ENCODE measurements at regions of chr17 and their contacts with region 1.

Region 1: DNA sequence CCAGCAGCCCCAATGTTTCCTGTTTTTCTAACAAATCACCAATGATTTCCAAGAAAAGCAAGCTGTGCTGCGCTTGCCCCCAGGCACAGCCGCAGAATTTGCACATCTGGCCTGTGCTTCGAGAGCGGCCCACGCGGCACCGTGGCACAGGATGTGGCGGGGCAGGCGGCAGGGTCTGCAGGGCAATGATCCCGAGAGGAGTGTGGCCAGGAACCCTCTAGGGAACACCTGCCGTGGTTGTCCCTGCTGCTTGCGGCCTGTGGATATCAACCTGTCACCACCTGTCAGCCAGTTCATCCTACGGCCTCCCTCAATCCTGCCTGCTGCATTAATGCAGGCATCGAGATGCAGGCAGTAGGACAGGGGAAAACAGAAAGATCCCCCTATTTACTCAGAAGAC is 24.0 kb downstream of the PIK3R5 start:
- DNase-seq: peak; percentile 68 to 77 (median 74)
- H3K4me3 ChIP-seq: peak overlapping the region in 1 of 2 donors; percentile 31
- H3K4me3 Mint-ChIP-seq: peak overlapping the region; percentile 71 to 90 (median 84)
- H3K27ac ChIP-seq: peak overlapping the region; percentile 75
- H3K27ac Mint-ChIP-seq: peak overlapping the region; percentile 94 to 99 (median 98)
- H3K4me1 ChIP-seq: peaks cover 85% of the 10 kb centered on the region
- H3K4me1 Mint-ChIP-seq: peaks cover 66 to 94% (median 80%) of the 10 kb centered on the region in 4 donors
- H3K27me3 ChIP-seq: no peaks in the 10 kb centered on the region
- H3K27me3 Mint-ChIP-seq: no peaks in the 10 kb centered on the region

Region 2: GRCh38 chr17:8806926-8807550 is 134.5 kb before region 1 on chr17:
- CTCF ChIA-PET with region 1: no interaction called
- POLR2A ChIA-PET with region 1: no interaction called
- intact Hi-C with region 1: no loop called
- DNase-seq: no peak
- H3K4me3 ChIP-seq: no peak overlapping the region
- H3K4me3 Mint-ChIP-seq: peak overlapping the region in 1 of 8 donors; percentile 3
- H3K27ac ChIP-seq: no peak overlapping the region
- H3K27ac Mint-ChIP-seq: peak overlapping the region in 4 of 7 donors; percentile 6 to 93 (median 16)
- H3K4me1 ChIP-seq: peaks cover 6% of the 10 kb centered on the region
- H3K4me1 Mint-ChIP-seq: peaks cover 1 to 11% (median 6%) of the 10 kb centered on the region in 4 donors
- H3K27me3 ChIP-seq: no peaks in the 10 kb centered on the region
- H3K27me3 Mint-ChIP-seq: peaks cover under 1 to 5% of the 10 kb centered on the region in 2 donors

Region 3: DNA sequence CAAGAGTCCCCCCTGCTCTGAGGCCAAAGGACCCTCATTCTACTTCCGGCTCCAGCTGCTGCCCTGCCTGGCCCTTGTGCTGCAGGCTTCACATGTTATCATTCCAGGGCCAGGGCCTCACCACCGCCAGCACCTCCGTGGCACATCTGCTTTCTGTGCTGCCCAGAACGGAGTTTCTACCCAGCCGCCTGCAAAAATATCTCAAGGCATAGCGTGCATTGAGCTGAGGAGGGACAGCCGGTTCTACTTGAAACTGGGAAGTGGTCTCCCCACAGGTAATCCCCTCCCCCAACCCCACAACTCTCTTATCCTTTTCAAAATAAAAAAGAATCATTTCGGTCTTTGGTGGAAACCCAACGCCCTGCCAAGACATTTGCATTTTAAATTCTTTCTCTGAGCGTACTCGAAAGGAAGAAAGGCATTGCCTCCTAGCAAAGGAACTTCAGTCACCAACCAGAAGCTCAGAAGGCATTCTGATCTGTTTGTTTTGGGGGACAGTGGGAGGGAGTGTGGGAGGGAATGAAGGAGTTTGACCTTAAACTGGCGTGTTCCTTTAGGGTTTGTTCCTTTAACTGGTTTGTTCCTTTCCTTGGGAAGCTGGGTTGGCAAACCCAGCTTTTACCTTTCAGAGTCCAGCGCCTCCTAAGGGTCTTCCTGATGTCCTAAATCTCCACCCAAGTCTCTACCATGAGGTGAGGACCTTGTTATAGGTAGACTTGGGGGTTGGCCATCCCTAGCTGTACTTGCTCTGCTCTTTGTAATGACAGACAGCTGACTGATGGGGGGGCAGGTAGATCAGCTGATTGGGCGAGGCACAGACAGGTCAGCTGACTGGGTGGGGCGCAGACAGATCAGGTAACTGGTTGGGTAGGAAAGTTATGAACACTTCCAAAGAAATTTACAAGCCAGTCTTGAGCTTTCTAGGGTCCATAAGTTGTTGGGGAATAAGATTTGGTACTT is 40.6 kb before region 1 on chr17:
- CTCF ChIA-PET with region 1: interaction called, 11 read pairs
- POLR2A ChIA-PET with region 1: interaction called, 19 read pairs
- intact Hi-C with region 1: no loop called
- DNase-seq: no peak
- H3K4me3 ChIP-seq: no peak overlapping the region
- H3K4me3 Mint-ChIP-seq: peak overlapping the region in 6 of 8 donors; percentile 18 to 86 (median 52)
- H3K27ac ChIP-seq: peak overlapping the region; percentile 82
- H3K27ac Mint-ChIP-seq: peak overlapping the region; percentile 96 to 100 (median 98)
- H3K4me1 ChIP-seq: peaks cover 59% of the 10 kb centered on the region
- H3K4me1 Mint-ChIP-seq: peaks cover 52 to 75% (median 65%) of the 10 kb centered on the region in 4 donors
- H3K27me3 ChIP-seq: no peaks in the 10 kb centered on the region
- H3K27me3 Mint-ChIP-seq: no peaks in the 10 kb centered on the region

Region 4: GRCh38 chr17:8954339-8954738 is 12.8 kb after region 1 on chr17:
- CTCF ChIA-PET with region 1: interaction called, 17 read pairs
- POLR2A ChIA-PET with region 1: interaction called, 509 read pairs
- intact Hi-C with region 1: loop called (anchors 1 kb)
- DNase-seq: peak; percentile 80 to 96 (median 81)
- H3K4me3 ChIP-seq: peak overlapping the region in 1 of 2 donors; percentile 27
- H3K4me3 Mint-ChIP-seq: peak overlapping the region; percentile 76 to 91 (median 88)
- H3K27ac ChIP-seq: peak overlapping the region; percentile 65
- H3K27ac Mint-ChIP-seq: peak overlapping the region; percentile 92 to 100 (median 98)
- H3K4me1 ChIP-seq: peaks cover 95% of the 10 kb centered on the region
- H3K4me1 Mint-ChIP-seq: peaks cover 77 to 98% (median 92%) of the 10 kb centered on the region in 4 donors
- H3K27me3 ChIP-seq: no peaks in the 10 kb centered on the region
- H3K27me3 Mint-ChIP-seq: no peaks in the 10 kb centered on the region

Region 5: GRCh38 chr17:8965394-8966168 is 24.1 kb after region 1 on chr17 and contains the start of gene PIK3R5:
- CTCF ChIA-PET with region 1: interaction called, 16 read pairs
- POLR2A ChIA-PET with region 1: interaction called, 509 read pairs
- intact Hi-C with region 1: loop called (anchors 2 kb)
- DNase-seq: peak; percentile 73 to 83 (median 78)
- H3K4me3 ChIP-seq: peak within 1 kb of the TSS; percentile 74 to 99
- H3K4me3 Mint-ChIP-seq: peak within 1 kb of the TSS; percentile 97 to 100 (median 98)
- H3K27ac ChIP-seq: peak within 1 kb of the TSS; percentile 79
- H3K27ac Mint-ChIP-seq: peak within 1 kb of the TSS; percentile 92 to 100 (median 96)
- H3K4me1 ChIP-seq: peaks cover 45% of the 10 kb centered on the region
- H3K4me1 Mint-ChIP-seq: peaks cover 35 to 46% (median 39%) of the 10 kb centered on the region in 4 donors
- H3K27me3 ChIP-seq: no peaks in the 10 kb centered on the region
- H3K27me3 Mint-ChIP-seq: no peaks in the 10 kb centered on the region
- total RNA-seq, gene PIK3R5: 85.1 to 89.4 TPM

Region 6: DNA sequence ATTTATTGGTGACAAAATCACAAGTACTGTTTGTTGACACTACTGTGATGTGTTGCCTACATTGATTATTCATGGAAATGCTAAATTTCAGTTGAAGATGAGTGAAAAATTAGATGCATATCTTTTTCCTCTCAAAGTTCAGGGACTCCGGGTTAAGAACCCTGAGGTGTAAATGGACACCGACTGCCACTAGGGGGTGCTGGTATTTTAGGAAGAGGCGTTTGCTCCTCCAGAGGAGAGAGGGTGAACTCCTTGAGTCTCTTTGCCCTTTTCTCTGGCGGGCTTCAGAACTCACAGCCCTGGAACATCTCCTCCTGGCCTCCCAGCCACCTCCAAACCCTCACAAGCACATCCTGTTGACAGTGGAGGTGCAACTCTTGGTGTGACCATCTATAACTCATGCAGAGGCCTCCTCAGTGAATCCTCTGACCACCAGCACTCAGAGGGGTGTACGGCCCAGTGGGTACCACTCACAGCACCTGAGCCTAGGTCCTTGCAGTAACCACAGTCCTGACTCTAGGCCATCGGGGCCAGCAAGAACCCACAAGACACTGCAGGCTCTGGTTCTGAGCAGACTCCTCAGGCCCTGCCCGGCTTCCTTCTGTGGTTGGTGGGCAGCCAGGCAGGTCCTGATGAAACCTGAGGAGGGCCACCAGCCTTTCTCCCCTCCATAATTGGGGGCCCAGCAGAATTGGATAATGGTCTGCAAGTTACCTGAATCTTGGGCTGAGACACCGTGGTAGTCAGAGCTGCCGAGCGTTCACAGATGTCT is 50.2 kb after region 1 on chr17:
- CTCF ChIA-PET with region 1: no interaction called
- POLR2A ChIA-PET with region 1: interaction called, 3 read pairs
- intact Hi-C with region 1: loop called (anchors 10 kb)
- DNase-seq: peak; percentile 56 to 71 (median 60)
- H3K4me3 ChIP-seq: no peak overlapping the region
- H3K4me3 Mint-ChIP-seq: no peak overlapping the region
- H3K27ac ChIP-seq: no peak overlapping the region
- H3K27ac Mint-ChIP-seq: peak overlapping the region in 2 of 7 donors; percentile 7 to 24
- H3K4me1 ChIP-seq: peaks cover 5% of the 10 kb centered on the region
- H3K4me1 Mint-ChIP-seq: peaks cover 4 to 10% (median 7%) of the 10 kb centered on the region in 4 donors
- H3K27me3 ChIP-seq: no peaks in the 10 kb centered on the region
- H3K27me3 Mint-ChIP-seq: peaks cover 2 to 4% of the 10 kb centered on the region in 2 donors

Measured in CD4-positive, alpha-beta memory T cell (primary cell).